Activated CD4-positive, alpha-beta T cell treated with anti-CD3 and anti-CD28 coated beads, Interleukin-2, amount 10 ng/mL, durations not matched to agents 7 days and 5 days (primary cell): ENCODE measurements at regions of chr2 and their contacts with region 1.

Region 1: GRCh38 chr2:26942543-26943295 is 27.7 kb upstream of the MAPRE3 start:
- DNase-seq: peak; percentile 68
- H3K4me3 Mint-ChIP-seq: no peak overlapping the region
- H3K27ac Mint-ChIP-seq: no peak overlapping the region
- H3K4me1 Mint-ChIP-seq: no peaks in the 10 kb centered on the region
- H3K27me3 Mint-ChIP-seq: peaks cover 5% of the 10 kb centered on the region

Region 2: GRCh38 chr2:26376799-26377198 is 565.9 kb before region 1 on chr2:
- CTCF ChIA-PET with region 1: no interaction called
- POLR2A ChIA-PET with region 1: no interaction called
- DNase-seq: no peak
- H3K4me3 Mint-ChIP-seq: no peak overlapping the region
- H3K27ac Mint-ChIP-seq: peak overlapping the region; percentile 81
- H3K4me1 Mint-ChIP-seq: peaks cover 33% of the 10 kb centered on the region
- H3K27me3 Mint-ChIP-seq: no peaks in the 10 kb centered on the region

Region 3: GRCh38 chr2:26846328-26847306 is 96.1 kb before region 1 on chr2:
- CTCF ChIA-PET with region 1: interaction called, 13 read pairs
- POLR2A ChIA-PET with region 1: no interaction called
- DNase-seq: peak; percentile 65
- H3K4me3 Mint-ChIP-seq: peak overlapping the region; percentile 40
- H3K27ac Mint-ChIP-seq: no peak overlapping the region
- H3K4me1 Mint-ChIP-seq: peaks cover 12% of the 10 kb centered on the region
- H3K27me3 Mint-ChIP-seq: peaks cover 52% of the 10 kb centered on the region

Region 4: GRCh38 chr2:26864226-26864625 is 78.5 kb before region 1 on chr2:
- CTCF ChIA-PET with region 1: no interaction called
- POLR2A ChIA-PET with region 1: no interaction called
- DNase-seq: no peak
- H3K4me3 Mint-ChIP-seq: no peak overlapping the region
- H3K27ac Mint-ChIP-seq: no peak overlapping the region
- H3K4me1 Mint-ChIP-seq: no peaks in the 10 kb centered on the region
- H3K27me3 Mint-ChIP-seq: peaks cover 32% of the 10 kb centered on the region

Region 5: DNA sequence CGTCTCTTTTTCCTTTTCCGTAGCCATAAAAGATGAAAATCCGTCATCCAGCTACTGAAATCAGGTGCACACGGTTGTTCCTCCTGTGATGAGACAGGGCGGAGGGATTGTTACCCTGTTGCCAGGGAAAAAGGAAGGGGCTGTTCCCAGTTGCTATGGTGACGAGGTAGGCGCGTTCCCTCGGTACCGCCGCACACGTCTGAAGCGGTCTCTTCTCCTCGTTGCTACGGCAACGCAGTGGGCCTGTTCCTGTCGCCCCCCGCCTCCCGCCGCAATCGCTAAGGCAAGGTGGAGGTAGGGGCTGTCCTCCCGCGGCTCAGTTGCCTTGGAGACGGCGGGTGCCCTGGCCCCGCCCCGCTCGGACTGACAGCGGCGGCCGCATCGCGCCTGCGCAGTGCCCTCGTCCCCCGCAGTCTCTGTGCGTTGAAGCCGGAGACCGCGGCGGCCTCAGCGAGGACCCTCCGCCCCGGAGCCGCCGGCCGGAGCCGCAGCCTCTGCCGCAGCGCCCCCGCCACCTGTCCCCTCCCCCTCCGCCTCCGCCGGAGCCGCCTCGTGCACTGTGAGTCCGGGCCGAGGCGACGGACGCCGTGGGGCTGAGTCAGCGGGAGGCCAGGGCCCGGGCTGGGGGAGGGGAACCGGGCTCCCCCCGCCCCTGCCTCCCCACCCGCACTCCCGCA is 27.7 kb after region 1 on chr2 and contains the start of gene MAPRE3:
- CTCF ChIA-PET with region 1: no interaction called
- POLR2A ChIA-PET with region 1: no interaction called
- DNase-seq: peak; percentile 78
- H3K4me3 Mint-ChIP-seq: peak within 1 kb of the TSS; percentile 70
- H3K27ac Mint-ChIP-seq: peak within 1 kb of the TSS; percentile 34
- H3K4me1 Mint-ChIP-seq: peaks cover 18% of the 10 kb centered on the region
- H3K27me3 Mint-ChIP-seq: peaks cover 42% of the 10 kb centered on the region
- total RNA-seq, gene MAPRE3: 1.00 to 1.3 TPM

Region 6: DNA sequence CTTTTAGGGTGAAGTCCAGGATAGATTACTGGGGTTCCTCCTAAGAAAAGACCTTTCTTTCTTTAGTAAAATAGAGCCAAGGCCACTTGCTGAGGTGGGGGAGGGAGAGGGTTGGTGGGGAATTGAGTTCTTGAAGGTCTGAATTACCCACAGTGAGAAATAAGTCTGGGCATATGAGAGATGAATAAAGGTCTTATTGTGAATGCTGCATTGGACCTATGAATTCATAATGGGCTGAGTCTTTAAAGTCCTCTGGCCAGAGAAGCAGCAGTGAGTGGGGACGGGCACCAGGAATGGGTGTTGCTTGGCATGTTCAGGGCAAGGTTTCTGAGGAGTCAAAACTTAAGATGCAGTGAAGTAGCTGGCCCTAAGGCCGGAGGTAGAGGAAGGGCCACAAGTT is 38.3 kb after region 1 on chr2:
- CTCF ChIA-PET with region 1: no interaction called
- POLR2A ChIA-PET with region 1: no interaction called
- DNase-seq: no peak
- H3K4me3 Mint-ChIP-seq: no peak overlapping the region
- H3K27ac Mint-ChIP-seq: no peak overlapping the region
- H3K4me1 Mint-ChIP-seq: no peaks in the 10 kb centered on the region
- H3K27me3 Mint-ChIP-seq: peaks cover 11% of the 10 kb centered on the region